SK-N-SH (cell line): ENCODE measurements at regions of chr12 and their contacts with region 1.

Region 1: DNA sequence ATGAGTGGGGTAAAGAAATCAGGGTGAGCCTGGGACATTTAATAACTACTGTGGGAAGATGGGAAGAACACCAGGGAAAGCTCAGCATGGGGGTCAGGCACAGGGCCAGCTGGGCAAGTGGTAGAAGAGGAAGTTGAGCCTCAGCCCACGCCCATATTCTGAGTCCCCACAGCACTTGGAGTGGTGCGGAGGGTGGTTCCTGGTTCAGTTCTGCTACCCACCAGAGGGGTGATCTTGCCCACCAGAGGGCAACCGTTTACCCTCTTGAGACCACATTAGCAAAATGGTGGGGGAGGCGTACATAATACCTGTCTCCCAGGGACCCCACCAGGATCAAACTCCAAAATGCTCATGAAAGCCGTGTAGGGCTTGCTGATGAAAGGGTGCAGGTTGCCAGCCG is 16.8 kb upstream of the ANKRD33 start:
- DNase-seq: no peak
- H3K4me3 ChIP-seq: no peak overlapping the region
- H3K27ac ChIP-seq: no peak overlapping the region
- H3K4me1 ChIP-seq: peaks cover 0 to 47% of the 10 kb centered on the region in 2 experiments; a peak in 1 of 4 replicates
- H3K27me3 ChIP-seq: no peaks in the 10 kb centered on the region; the same call in 1 of the 2 replicates
- CTCF ChIP-seq: no peak
- EP300 ChIP-seq: no peak
- RAD21 ChIP-seq: no peak

Region 2: GRCh38 chr12:51424662-51425438 is 446.3 kb before region 1 on chr12 and contains the start of gene SLC4A8:
- CTCF ChIA-PET with region 1: interaction called, 20 read pairs
- POLR2A ChIA-PET with region 1: no interaction called
- DNase-seq: peak; percentile 96
- H3K4me3 ChIP-seq: peak within 1 kb of the TSS; percentile 76 to 84
- H3K27ac ChIP-seq: peak within 1 kb of the TSS in 1 of 2 experiments; percentile 90; a peak in 3 of 4 replicates
- H3K4me1 ChIP-seq: peaks cover 4 to 32% of the 10 kb centered on the region in 2 experiments; a peak in 2 of 4 replicates
- H3K27me3 ChIP-seq: no peaks in the 10 kb centered on the region
- CTCF ChIP-seq: peak; percentile 83
- EP300 ChIP-seq: no peak
- RAD21 ChIP-seq: peak; percentile 59
- polyA plus RNA-seq, gene SLC4A8: 3.6 and 5.2 TPM in 2 replicates

Region 3: GRCh38 chr12:51823875-51824565 is 47.1 kb before region 1 on chr12:
- CTCF ChIA-PET with region 1: interaction called, 194 read pairs
- POLR2A ChIA-PET with region 1: interaction called, 3 read pairs
- DNase-seq: peak; percentile 66
- H3K4me3 ChIP-seq: no peak overlapping the region
- H3K27ac ChIP-seq: no peak overlapping the region
- H3K4me1 ChIP-seq: peaks cover 8 to 23% of the 10 kb centered on the region in 2 experiments; a peak in 2 of 4 replicates
- H3K27me3 ChIP-seq: no peaks in the 10 kb centered on the region
- CTCF ChIP-seq: peak; percentile 70
- EP300 ChIP-seq: no peak
- RAD21 ChIP-seq: peak; percentile 78

Region 4: GRCh38 chr12:51839310-51839947 is 31.7 kb before region 1 on chr12:
- CTCF ChIA-PET with region 1: interaction called, 11 read pairs
- POLR2A ChIA-PET with region 1: no interaction called
- DNase-seq: no peak
- H3K4me3 ChIP-seq: no peak overlapping the region
- H3K27ac ChIP-seq: no peak overlapping the region
- H3K4me1 ChIP-seq: peaks cover 0 to 49% of the 10 kb centered on the region in 2 experiments; a peak in 1 of 4 replicates
- H3K27me3 ChIP-seq: peaks cover 9% of the 10 kb centered on the region; the same call in 1 of the 2 replicates
- CTCF ChIP-seq: no peak
- EP300 ChIP-seq: no peak
- RAD21 ChIP-seq: no peak

Region 5: DNA sequence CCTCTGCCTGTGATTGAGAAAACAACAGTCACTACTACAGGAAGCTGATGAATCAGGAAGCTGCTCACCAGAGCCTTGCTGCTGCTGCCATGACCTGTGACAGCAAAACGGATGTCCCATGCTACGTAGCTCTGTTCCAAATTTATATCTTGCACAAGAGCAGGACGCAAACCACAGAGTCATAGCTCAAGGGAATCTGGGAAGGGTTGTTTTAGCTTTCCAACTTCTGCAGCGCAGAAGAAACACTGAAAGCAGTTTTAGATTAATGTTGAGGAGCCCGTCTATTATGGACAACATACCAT is 14.8 kb after region 1 on chr12:
- CTCF ChIA-PET with region 1: interaction called, 23 read pairs
- POLR2A ChIA-PET with region 1: no interaction called
- DNase-seq: no peak
- H3K4me3 ChIP-seq: no peak overlapping the region
- H3K27ac ChIP-seq: peak overlapping the region in 1 of 2 experiments; percentile 58; a peak in 2 of 4 replicates
- H3K4me1 ChIP-seq: no peaks in the 10 kb centered on the region; a peak in 1 of 4 replicates
- H3K27me3 ChIP-seq: no peaks in the 10 kb centered on the region
- CTCF ChIP-seq: no peak
- EP300 ChIP-seq: no peak
- RAD21 ChIP-seq: no peak

Region 6: GRCh38 chr12:51970904-51971646 is 99.9 kb after region 1 on chr12:
- CTCF ChIA-PET with region 1: no interaction called
- POLR2A ChIA-PET with region 1: no interaction called
- DNase-seq: peak; percentile 57
- H3K4me3 ChIP-seq: no peak overlapping the region
- H3K27ac ChIP-seq: no peak overlapping the region
- H3K4me1 ChIP-seq: peaks cover 31% of the 10 kb centered on the region in 2 experiments; a peak in 3 of 4 replicates
- H3K27me3 ChIP-seq: no peaks in the 10 kb centered on the region
- CTCF ChIP-seq: peak; percentile 67
- EP300 ChIP-seq: no peak
- RAD21 ChIP-seq: peak; percentile 16; the same call in 1 of the 2 replicates